ENCODE measurements at regions of chr1 and their contacts with region 1.

Region 1: GRCh38 chr1:201085916-201086735 is 26.1 kb downstream of the CACNA1S start:
- DNase-seq: peak; percentile 81

Region 2: DNA sequence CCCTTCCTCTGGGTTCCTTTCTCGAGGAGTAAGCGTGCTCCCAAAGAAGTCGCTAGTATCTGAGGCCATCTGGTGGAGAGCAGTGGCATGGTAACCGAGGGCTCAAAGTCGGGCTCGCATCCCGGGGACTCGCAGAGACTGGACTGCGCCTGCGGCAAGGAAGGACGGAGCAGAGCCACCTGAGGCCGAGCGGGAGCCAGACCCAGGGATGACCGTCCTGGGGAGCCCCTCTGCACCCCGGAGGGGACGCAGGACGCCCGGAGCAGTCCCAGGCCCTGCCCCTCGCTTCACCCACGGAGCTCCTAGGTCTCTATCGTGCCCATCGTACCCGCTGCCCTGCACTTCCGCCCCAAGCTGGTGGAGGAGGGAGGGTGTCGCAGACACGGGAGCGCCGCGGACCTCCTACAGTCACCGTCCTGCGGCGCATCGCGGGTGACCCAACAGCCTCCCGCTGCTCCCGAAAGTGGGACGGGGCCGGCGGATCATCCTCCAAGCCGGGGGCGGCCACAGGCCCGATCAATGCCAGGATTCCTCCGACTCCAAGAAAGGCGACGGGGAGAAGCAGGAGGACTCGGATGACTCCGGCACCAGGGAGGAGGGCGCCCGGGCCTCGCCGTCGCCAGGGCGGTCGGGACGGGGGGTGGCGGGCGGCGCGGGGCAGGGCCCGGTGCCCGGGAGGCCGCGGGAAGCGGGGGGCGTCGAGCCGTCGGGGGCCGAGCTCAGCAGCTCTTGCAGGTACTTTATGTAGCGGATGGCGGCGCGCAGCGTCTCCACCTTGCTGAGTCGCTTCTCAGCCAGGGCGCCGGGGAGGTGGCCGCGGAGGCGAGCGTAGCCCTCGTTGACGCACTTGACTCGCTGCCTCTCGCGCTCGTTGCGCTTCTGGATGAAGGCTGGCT is 28.4 kb after region 1 on chr1:
- CTCF ChIA-PET with region 1: interaction called, 13 read pairs
- POLR2A ChIA-PET with region 1: no interaction called
- DNase-seq: peak; percentile 96

Region 3: DNA sequence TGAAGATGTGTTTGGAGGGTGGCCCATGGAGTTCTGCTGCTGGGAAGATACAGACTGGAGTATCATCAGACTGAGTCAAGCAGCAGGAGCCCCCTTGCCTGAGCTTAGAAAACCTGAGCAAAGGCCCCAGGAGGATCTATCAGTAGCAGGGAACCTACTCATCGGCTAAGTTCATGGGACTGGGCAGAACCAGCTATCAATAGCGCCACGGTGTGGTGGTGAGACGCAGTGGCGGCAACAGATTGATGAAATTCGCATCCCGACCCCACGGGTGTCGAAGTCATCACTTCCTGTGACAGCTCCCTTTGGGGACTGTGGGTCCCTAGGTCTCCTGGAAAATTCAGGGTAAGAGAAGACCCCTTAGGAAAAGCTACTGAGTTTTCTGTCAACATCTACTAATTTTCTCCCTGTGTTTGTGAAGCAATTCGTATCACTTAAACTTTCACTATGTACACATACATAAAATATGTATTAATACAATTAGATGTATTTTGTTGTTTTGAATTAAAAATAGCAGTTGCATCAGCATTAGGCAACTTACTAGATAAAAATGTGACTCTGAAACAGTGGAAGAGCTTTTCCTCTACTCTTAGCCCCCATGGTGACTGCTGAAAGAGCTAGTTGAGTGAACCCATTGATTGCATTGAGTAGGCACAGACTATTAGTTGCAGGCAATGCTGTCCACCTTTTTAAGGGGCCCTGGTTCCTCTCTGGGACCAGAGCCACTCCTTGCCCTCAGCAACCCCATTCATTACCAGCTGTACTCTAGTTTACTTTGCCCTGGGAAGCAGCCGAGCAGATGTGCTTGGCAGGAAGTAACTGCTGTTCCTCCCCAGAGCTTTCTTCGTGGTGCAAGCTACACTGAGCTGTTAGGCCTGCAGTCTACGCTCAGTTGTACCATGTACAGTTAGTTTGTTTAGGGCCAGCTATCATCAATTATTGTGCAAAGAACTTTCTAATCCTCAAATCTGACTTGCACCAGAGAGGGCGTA is 33.4 kb after region 1 on chr1:
- CTCF ChIA-PET with region 1: interaction called, 13 read pairs
- POLR2A ChIA-PET with region 1: no interaction called
- DNase-seq: peak; percentile 83

Region 4: GRCh38 chr1:201131398-201131797 is 45.3 kb after region 1 on chr1:
- CTCF ChIA-PET with region 1: no interaction called
- POLR2A ChIA-PET with region 1: no interaction called
- DNase-seq: no peak